Mammary epithelial cell (primary cell): ENCODE measurements at regions of chr4 and their contacts with region 1.

Region 1: DNA sequence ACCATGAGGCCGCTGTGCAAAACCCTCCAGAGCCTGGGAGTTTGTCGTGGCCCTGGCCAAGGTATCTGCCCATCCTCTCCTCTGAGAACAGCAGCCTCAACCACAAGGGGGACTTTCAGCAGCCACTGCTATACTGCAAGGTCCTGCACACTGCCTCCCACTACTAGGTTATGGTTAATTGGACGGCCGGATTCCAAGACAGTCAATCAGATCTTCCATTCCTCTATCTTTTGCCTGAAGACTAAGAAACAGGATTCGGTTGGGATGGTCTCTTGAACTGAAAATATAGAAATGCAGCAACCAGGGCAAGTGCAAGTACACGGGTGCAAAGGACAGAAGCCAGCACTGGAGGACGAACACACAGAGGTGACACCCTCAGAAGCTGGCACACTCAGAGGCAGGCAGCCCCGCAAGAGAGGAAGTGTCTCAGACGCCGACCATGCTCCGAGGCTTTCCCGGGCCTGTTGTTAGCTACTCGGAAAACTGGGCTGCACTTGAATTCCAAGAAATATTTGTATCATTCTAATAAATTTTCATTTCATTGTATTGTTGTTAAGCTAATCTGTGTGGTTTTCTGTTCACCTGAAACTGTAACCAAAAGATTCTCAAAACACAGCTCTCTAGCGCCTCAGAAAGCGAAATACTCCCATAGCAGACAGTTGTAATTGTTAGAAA is 63.3 kb downstream of the AFAP1 start:
- DNase-seq: peak; percentile 66
- H3K4me3 ChIP-seq: no peak overlapping the region
- H3K27ac ChIP-seq: no peak overlapping the region
- H3K4me1 ChIP-seq: peaks cover 22% of the 10 kb centered on the region
- H3K27me3 ChIP-seq: no peaks in the 10 kb centered on the region
- CTCF ChIP-seq: peak; percentile 34 to 49

Region 2: DNA sequence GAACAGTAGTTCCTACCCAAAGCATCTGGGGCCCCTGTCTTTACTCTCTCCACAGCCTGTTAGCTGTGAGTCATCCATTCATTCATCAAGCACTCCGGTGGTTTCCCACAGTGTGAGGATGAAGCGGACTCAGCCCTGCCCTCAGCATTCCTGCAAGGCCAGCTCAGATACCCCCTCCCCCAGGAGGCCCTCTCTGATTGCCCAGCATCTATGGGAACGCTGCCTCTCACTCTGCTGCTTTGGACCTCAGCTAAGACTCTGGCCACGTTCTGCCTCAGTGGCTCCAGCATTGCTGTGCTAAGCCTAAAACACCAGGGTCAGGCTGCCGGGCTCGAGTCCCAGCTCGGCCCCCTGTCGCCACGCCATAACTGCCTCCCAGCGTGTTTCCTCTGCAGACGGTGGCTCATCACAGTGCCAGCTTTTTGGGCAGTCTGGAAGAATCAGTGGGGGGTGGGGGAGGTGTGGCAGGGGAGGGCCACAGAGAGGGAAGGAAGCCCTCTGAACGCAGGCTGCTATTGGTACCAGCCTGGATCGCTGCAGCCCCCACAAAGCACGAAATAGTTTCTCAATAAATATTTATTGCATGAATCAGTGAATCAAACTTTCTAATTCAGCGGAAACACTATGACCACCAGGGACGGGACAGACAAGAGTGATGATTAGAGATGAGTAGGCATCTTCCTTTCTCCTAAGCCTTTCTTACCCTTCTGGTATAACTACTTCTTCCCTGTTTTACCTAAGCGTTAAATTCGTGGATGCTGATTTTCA is 609.6 kb before region 1 on chr4:
- CTCF ChIA-PET with region 1: no interaction called
- dilution Hi-C with region 1: no loop called
- in situ Hi-C with region 1: no loop called
- intact Hi-C with region 1: no loop called
- DNase-seq: peak; percentile 84
- H3K4me3 ChIP-seq: no peak overlapping the region
- H3K27ac ChIP-seq: no peak overlapping the region
- H3K4me1 ChIP-seq: peaks cover 16% of the 10 kb centered on the region
- H3K27me3 ChIP-seq: no peaks in the 10 kb centered on the region
- CTCF ChIP-seq: no peak

Region 3: DNA sequence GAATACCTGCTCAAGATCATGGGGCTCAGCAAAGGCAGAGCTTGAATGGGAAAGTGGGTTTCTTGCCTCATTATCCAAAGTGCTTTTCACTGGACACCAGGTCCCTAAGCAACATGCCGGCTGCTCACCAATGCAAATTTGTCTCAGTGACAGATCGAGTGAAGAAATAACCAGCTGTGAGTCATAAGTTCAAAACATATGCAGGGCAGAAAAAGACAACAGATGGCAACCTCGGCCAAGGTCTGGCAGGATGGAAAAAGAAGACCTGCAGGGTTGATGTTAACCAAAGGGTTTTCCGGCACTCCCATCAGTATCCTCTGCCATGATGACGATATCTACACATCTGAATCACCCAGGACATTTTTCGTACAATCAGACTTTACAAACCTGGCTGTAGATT is 60.8 kb before region 1 on chr4:
- CTCF ChIA-PET with region 1: no interaction called
- dilution Hi-C with region 1: loop called (anchors 5 kb)
- in situ Hi-C with region 1: no loop called
- intact Hi-C with region 1: no loop called
- DNase-seq: peak; percentile 67
- H3K4me3 ChIP-seq: no peak overlapping the region
- H3K27ac ChIP-seq: no peak overlapping the region
- H3K4me1 ChIP-seq: peaks cover 18% of the 10 kb centered on the region
- H3K27me3 ChIP-seq: no peaks in the 10 kb centered on the region
- CTCF ChIP-seq: peak in 1 of 2 donors; percentile 5

Region 4: GRCh38 chr4:7904952-7905915 is 28.9 kb after region 1 on chr4:
- CTCF ChIA-PET with region 1: no interaction called
- dilution Hi-C with region 1: loop called (anchors 5 kb)
- in situ Hi-C with region 1: no loop called
- intact Hi-C with region 1: loop called (anchors 2 kb)
- DNase-seq: peak; percentile 60
- H3K4me3 ChIP-seq: no peak overlapping the region
- H3K27ac ChIP-seq: peak overlapping the region; percentile 4
- H3K4me1 ChIP-seq: peaks cover 33% of the 10 kb centered on the region
- H3K27me3 ChIP-seq: no peaks in the 10 kb centered on the region
- CTCF ChIP-seq: no peak

Region 5: DNA sequence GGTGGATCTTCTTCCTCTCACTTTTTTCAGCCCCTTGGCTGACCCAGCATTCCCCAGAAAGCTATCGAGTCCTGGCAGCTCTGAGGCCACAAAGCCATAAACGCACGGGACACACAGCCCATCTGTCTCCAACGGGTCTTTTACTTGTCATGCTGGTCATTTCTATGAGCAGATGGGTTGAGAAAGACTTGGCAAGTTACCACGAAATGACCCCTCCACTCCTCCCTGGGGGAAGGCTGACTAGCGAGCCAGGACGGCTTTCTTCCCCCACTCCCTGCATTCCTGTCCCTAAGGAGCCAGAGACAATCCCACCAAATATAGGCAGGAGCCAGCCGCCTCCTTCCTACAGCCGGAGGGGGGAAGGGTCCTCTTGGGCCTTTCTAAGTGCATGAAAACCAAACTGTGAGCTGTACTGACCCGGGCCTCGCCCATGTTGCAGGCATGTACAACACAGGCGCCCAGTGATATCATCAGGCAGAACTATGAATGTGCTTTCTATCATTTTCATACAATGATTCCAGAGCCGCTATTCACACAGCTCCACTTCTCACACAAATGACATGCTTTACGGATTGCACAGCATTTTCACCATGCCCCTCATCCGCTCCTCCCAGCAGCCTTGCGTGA is 34.7 kb after region 1 on chr4:
- CTCF ChIA-PET with region 1: no interaction called
- dilution Hi-C with region 1: loop called (anchors 5 kb)
- in situ Hi-C with region 1: no loop called
- intact Hi-C with region 1: loop called (anchors 2 kb)
- DNase-seq: peak; percentile 65
- H3K4me3 ChIP-seq: no peak overlapping the region
- H3K27ac ChIP-seq: peak overlapping the region; percentile 42
- H3K4me1 ChIP-seq: peaks cover 30% of the 10 kb centered on the region
- H3K27me3 ChIP-seq: no peaks in the 10 kb centered on the region
- CTCF ChIP-seq: no peak

Region 6: DNA sequence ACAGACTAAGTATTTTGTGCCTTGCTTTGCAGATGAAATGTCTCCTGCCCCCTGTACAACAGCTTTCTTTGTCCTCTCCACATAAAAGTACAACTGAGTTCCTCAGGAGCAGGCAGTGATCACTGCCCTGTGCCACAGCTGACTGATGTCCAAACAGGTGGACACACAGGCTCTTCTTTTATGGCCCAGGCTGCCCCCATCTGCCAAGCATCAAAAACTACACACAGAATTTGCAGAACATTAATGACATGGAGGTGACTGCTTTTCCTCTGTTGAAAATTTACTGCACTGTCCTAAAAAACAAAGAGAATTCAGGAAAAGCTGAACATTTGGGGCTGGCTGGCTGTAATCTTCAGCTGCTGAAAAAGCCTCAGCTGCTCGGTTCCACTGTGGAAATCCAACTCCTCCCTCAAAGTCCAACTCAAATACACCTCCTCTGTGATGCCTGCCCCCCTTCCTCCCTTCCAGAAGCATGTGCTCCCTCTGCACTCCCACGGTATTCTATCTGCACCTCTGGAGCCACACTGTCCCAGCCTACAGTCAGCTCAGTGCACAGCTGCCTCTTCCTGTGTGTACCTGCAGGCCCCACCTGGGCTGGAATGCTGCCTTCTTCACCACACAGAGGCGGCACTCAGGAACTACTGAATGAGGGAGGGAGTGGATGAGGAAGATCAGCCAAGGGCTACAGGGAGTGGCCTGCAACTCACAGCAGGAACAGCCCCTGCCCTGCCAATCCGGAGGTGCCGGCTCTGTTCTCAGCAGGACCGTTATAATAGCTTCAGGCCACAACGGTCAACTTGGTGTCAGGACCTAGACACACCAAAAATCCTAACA is 53.0 kb after region 1 on chr4:
- CTCF ChIA-PET with region 1: no interaction called
- dilution Hi-C with region 1: no loop called
- in situ Hi-C with region 1: no loop called
- intact Hi-C with region 1: loop called (anchors 2 kb)
- DNase-seq: peak; percentile 90
- H3K4me3 ChIP-seq: no peak overlapping the region
- H3K27ac ChIP-seq: peak overlapping the region; percentile 33
- H3K4me1 ChIP-seq: peaks cover 33% of the 10 kb centered on the region
- H3K27me3 ChIP-seq: no peaks in the 10 kb centered on the region
- CTCF ChIP-seq: peak in 1 of 2 donors; percentile 56